PC-3 (cell line): ENCODE measurements at regions of chr4 and their contacts with region 1.

Region 1: GRCh38 chr4:157226035-157226434 is 5.5 kb downstream of the GRIA2 start:
- DNase-seq: no peak
- ATAC-seq: no peak
- H3K4me3 ChIP-seq: no peak overlapping the region
- H3K27ac ChIP-seq: no peak overlapping the region
- H3K4me1 ChIP-seq: no peaks in the 10 kb centered on the region
- H3K27me3 ChIP-seq: no peaks in the 10 kb centered on the region; the same call in 1 of the 2 replicates
- CTCF ChIP-seq: no peak

Region 2: DNA sequence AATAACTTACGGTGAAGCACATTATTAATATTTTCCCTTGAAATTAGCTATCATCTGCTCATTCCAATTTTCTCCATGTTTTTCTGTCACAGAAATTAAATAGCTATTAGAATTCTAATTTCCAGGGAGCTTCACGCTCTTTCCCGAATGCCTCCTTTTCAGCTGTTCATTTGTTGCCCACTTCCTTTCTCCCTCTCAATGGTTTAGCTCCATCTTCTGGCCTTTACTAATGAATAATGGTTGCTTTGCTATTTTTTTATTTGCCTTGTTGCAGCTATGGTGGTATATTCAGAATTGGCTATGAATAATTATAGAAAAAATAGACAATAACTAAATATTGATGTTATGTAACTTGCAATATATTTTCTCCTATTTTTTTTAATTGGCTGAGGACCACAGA is 65.0 kb after region 1 on chr4:
- CTCF ChIA-PET with region 1: no interaction called
- POLR2A ChIA-PET with region 1: no interaction called
- intact Hi-C with region 1: loop called (anchors 5 kb)
- DNase-seq: peak; percentile 5
- ATAC-seq: no peak
- H3K4me3 ChIP-seq: no peak overlapping the region
- H3K27ac ChIP-seq: no peak overlapping the region
- H3K4me1 ChIP-seq: no peaks in the 10 kb centered on the region
- H3K27me3 ChIP-seq: no peaks in the 10 kb centered on the region
- CTCF ChIP-seq: peak; percentile 37

Region 3: GRCh38 chr4:157514711-157515110 is 288.7 kb after region 1 on chr4:
- CTCF ChIA-PET with region 1: no interaction called
- POLR2A ChIA-PET with region 1: no interaction called
- intact Hi-C with region 1: loop called (anchors 5 kb)
- DNase-seq: peak; percentile 2
- ATAC-seq: peak; percentile 50; the same call in 1 of the 2 replicates
- H3K4me3 ChIP-seq: no peak overlapping the region
- H3K27ac ChIP-seq: no peak overlapping the region
- H3K4me1 ChIP-seq: no peaks in the 10 kb centered on the region
- H3K27me3 ChIP-seq: no peaks in the 10 kb centered on the region
- CTCF ChIP-seq: no peak; the same call in none of the 2 replicates